Left cardiac atrium (tissue), 4 donors: ENCODE measurements at regions of chr14 and their contacts with region 1.

Region 1: DNA sequence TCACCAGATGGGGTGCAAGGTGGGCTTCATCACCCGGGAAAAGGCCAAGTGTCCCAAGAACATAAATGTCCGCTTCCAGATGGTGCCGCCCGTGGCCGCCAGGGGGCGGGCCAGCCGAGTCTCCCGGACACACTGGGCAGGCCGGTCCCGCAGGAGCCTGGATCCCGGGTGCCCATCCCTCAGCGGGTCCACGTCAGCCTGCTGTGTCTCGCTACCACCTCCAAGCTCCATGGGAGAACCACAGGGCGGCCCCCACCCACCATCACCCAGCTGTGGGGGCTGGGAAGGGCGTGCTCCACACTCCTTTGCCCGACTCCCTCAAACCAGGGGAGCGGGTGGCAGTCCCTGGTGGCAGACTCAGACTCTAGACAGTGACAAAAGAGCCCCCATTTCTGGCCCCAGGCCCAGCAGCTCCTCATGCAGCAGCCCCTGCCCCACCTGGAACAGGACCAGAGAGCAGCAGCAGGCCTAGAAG is 22.0 kb upstream of the NUDT14 start:
- DNase-seq: peak; percentile 80
- ATAC-seq: peak; percentile 47 to 60

Region 2: DNA sequence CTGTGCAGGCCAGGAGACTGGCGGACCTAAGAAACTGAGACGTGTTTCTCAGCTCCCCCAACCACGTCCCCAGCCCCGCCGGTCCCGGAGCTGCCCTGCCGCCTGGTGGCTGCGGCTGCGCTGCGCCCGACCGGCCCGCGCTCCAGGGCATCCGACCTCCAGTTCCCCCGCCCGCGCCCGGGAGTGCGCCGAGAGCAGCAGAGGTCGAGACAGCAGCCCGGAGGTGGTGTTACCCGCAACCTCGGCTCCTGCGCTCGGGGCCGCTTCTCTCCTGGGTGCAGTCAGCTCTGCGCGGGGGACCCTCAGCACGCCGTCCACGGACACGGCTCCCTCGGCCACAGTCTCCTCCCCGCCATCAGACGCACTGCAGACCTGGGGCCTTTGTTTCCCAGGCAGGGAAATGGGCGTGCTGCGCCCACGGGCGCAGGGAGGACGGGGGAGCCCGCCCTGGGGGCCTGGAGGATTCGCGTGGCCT is 116.2 kb before region 1 on chr14:
- intact Hi-C with region 1: no loop called
- DNase-seq: peak; percentile 82
- ATAC-seq: peak; percentile 57 to 59

Region 3: GRCh38 chr14:105281371-105282097 is 78.4 kb after region 1 on chr14:
- intact Hi-C with region 1: loop called (anchors 5 kb)
- DNase-seq: no peak
- ATAC-seq: peak; percentile 18 to 55

Region 4: DNA sequence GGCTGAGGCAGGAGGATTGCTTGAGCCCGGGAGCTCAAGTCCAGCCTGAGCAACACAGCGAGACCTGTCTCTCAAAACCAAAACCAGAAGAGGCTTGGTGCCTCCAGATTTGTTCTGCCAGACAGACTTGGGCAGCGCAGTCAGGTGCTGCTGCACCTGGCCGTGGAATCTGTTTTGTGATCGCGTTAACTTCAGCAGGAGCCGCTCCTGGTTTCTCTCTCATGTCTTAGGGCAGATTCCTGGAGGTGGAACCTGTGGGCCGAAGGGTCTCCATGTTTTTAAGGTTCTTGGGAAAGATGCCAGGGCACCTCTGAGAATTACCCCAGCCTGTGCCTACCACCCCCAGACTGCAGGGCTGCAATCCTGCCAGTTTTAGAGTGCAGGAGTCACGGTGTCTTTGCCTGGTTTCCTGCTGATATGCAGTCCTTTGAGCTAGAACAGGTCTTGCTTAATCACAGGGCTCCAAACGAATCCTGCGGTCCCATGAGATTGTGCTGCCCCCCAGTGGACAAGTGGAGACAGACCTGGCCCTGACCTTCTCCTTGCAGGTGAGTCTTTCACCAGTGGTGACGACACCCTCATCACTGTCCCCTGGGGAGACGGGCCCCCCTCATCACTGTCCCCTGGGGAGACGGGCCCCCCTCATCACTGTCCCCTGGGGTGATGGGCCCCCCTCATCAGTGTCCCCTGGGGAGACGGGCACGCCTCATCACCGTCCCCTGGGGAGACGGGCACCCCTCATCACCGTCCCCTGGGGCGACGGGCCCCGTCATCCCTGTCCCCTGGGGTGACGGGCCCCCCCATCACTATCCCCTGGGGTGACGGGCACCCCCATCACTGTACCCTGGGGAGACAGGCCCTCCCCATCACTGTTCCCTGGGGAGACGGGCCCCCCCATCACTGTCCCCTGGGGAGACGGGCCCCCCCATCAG is 149.1 kb after region 1 on chr14:
- intact Hi-C with region 1: loop called (anchors 5 kb)
- DNase-seq: peak; percentile 86
- ATAC-seq: peak; percentile 89 to 92

Region 5: DNA sequence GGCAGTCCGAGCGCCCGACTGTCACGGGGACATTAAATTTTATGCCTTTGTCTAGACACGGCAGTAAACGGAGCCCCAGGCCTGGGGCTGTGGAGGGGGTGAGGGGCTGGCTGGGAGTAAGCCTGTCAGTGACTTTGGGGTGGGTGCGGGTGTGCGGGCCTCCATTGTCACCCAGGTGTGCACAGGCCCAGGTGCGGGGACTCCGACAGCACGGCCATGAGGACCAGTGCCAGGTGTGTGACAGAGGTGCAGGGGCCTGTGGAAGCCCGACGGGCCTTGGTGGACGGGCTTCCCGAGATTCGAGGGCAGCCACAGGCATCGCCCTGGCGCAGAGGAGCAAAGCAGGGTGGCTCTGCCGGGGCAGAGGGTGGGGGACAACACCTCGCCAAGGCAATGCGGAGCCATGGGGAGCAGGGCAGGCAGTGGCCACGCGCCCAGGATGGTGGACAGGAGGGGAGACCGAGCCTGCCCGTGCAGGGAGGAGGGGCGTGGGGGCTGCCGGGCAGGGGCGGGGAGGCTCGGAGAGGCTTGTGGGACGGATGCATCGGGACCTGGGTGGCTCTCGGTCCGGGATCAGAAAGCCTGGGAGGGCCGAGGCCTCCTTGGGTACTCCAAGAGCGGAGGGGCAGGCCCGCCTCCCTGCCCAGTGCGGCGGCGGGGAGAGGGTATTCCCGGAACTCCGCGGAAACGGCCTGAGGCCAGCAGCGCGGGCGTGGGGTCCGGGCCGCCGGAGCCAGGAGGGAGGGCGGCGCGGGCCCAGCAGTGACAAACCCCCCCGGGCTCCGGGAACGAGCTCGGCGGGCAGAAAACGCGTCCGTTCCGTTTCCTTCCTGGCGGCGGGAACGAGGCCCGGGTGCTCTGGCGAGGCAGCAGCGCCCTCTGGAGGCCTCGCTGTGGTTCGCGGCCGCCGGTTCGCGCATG is 324.8 kb after region 1 on chr14:
- intact Hi-C with region 1: loop called in 1 of 2 experiments (anchors 10 kb)
- DNase-seq: peak; percentile 84
- ATAC-seq: peak; percentile 78 to 79